ENCODE measurements at regions of chr2 and their contacts with region 1.

Region 1: DNA sequence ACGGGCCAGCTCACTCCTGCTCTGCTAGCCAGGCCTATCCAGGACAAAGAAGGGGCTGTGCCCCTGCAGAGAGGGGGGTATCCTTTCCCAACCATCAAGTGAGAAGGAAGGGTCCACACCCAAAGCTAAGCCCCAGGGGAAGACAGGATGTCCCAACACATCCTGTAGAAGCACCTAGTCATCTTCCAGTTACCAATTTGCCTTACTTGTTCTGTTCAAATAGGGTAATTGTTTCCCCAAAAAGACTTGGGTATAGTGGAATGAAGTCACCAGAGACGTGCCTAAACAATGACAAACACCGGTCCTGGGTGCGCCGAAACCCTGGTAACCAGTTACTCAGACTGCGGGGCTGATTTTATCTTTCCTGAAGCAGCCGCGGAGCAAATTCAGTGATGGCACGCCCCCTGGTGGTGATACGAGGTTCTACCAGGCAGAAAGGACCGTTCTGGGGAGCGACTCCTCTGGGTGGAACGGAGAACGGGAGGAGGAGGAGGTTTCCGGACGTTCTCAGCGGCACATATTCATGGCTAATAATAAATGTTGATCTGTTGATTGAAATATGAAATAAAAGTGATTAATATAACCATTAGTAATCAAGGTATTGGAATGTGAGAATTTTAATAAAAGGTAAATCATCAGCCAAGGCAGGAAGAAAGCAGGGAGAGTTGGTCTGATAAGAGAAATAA is 109.3 kb upstream of the STON1 start:
- DNase-seq: peak; percentile 88 to 93
- H3K4me3 ChIP-seq: no peak overlapping the region
- H3K4me3 Mint-ChIP-seq: peak overlapping the region; percentile 56
- H3K27ac Mint-ChIP-seq: no peak overlapping the region
- H3K4me1 ChIP-seq: peaks cover 17% of the 10 kb centered on the region
- H3K4me1 Mint-ChIP-seq: peaks cover 27% of the 10 kb centered on the region
- H3K27me3 ChIP-seq: no peaks in the 10 kb centered on the region
- H3K27me3 Mint-ChIP-seq: no peaks in the 10 kb centered on the region
- CTCF ChIP-seq: peak; percentile 97 to 98

Region 2: DNA sequence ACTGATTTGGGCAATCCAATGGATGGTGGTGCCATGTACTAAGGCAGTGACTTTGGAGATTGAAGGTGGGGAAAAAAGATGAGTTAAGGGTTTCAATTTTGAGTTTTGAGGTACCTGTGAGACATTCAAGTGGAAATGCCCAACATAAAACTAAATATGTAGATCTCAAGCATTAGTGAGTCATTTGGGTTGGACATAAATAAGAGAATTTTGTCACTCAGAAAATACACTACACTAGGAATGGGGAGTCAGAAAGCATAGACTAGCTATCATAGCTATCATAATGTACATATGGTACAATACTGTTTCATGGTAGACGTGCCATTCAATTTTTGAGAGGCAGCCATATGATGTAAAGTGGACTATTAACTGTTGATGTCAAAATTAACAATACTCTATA is 570.5 kb before region 1 on chr2:
- CTCF ChIA-PET with region 1: no interaction called
- POLR2A ChIA-PET with region 1: no interaction called
- intact Hi-C with region 1: loop called (anchors 10 kb)
- DNase-seq: no peak
- H3K4me3 ChIP-seq: no peak overlapping the region
- H3K4me3 Mint-ChIP-seq: no peak overlapping the region
- H3K27ac Mint-ChIP-seq: no peak overlapping the region
- H3K4me1 ChIP-seq: no peaks in the 10 kb centered on the region
- H3K4me1 Mint-ChIP-seq: peaks cover 7% of the 10 kb centered on the region
- H3K27me3 ChIP-seq: no peaks in the 10 kb centered on the region
- H3K27me3 Mint-ChIP-seq: no peaks in the 10 kb centered on the region
- CTCF ChIP-seq: no peak

Region 3: GRCh38 chr2:48227617-48228344 is 192.9 kb before region 1 on chr2:
- CTCF ChIA-PET with region 1: no interaction called
- POLR2A ChIA-PET with region 1: no interaction called
- intact Hi-C with region 1: loop called (anchors 10 kb)
- DNase-seq: no peak
- H3K4me3 ChIP-seq: no peak overlapping the region
- H3K4me3 Mint-ChIP-seq: no peak overlapping the region
- H3K27ac Mint-ChIP-seq: no peak overlapping the region
- H3K4me1 ChIP-seq: 0 out of 2 replicates have a peak, but pooled peaks cover under 1% of the 10 kb centered on the region
- H3K4me1 Mint-ChIP-seq: no peaks in the 10 kb centered on the region
- H3K27me3 ChIP-seq: no peaks in the 10 kb centered on the region
- H3K27me3 Mint-ChIP-seq: no peaks in the 10 kb centered on the region
- CTCF ChIP-seq: no peak

Region 4: GRCh38 chr2:48272199-48272598 is 148.5 kb before region 1 on chr2:
- CTCF ChIA-PET with region 1: no interaction called
- POLR2A ChIA-PET with region 1: no interaction called
- intact Hi-C with region 1: no loop called
- DNase-seq: no peak
- H3K4me3 ChIP-seq: no peak overlapping the region
- H3K4me3 Mint-ChIP-seq: no peak overlapping the region
- H3K27ac Mint-ChIP-seq: no peak overlapping the region
- H3K4me1 ChIP-seq: peaks cover 38% of the 10 kb centered on the region
- H3K4me1 Mint-ChIP-seq: peaks cover 25% of the 10 kb centered on the region
- H3K27me3 ChIP-seq: no peaks in the 10 kb centered on the region
- H3K27me3 Mint-ChIP-seq: no peaks in the 10 kb centered on the region
- CTCF ChIP-seq: no peak

Region 5: DNA sequence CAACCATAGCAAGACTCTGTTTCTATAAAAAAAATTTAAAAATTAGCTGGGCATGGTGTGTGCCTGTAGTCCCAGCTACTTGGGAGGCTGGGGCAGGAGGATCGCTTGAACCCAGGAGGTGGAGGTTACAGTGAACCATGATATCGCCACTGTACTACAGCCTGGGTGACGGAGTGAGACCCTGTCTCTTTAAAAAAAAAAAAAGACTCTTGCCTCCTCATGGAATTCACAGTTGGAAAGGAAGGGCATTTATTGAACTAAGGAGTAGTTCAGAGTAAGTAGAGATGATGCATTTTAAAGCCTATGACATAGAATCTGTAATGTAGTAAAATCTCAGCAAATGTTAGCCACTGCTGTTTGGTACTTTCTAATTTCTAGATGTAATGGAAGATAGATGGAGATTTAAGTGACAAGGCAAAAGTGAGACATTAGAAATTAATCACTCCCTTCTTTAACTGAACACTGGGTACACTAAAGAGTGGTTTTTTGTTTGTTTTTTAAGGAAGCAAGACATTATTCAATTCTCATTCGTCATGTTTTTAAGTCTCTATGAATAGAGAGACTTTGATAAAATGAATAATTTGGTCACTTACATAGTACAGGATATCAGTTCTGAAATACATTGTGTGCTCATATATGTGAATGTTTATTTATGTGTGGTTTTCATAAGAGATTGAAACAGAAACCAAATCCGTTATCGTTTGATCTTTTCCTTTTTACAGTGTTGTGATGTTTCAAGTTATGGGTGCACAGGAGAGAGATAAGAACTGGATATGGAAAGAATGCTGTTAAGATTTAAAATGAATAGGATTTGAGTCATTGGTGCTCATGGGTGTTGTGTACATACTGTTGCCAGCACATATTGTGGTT is 76.8 kb before region 1 on chr2:
- CTCF ChIA-PET with region 1: no interaction called
- POLR2A ChIA-PET with region 1: no interaction called
- intact Hi-C with region 1: loop called (anchors 5 kb)
- DNase-seq: peak in 1 of 2 experiments; percentile 38
- H3K4me3 ChIP-seq: no peak overlapping the region
- H3K4me3 Mint-ChIP-seq: peak overlapping the region; percentile 73
- H3K27ac Mint-ChIP-seq: peak overlapping the region; percentile 87
- H3K4me1 ChIP-seq: peaks cover 35% of the 10 kb centered on the region
- H3K4me1 Mint-ChIP-seq: peaks cover 18% of the 10 kb centered on the region
- H3K27me3 ChIP-seq: no peaks in the 10 kb centered on the region
- H3K27me3 Mint-ChIP-seq: no peaks in the 10 kb centered on the region
- CTCF ChIP-seq: no peak